GM23248 (cell line): ENCODE measurements at regions of chr15 and their contacts with region 1.

Region 1: DNA sequence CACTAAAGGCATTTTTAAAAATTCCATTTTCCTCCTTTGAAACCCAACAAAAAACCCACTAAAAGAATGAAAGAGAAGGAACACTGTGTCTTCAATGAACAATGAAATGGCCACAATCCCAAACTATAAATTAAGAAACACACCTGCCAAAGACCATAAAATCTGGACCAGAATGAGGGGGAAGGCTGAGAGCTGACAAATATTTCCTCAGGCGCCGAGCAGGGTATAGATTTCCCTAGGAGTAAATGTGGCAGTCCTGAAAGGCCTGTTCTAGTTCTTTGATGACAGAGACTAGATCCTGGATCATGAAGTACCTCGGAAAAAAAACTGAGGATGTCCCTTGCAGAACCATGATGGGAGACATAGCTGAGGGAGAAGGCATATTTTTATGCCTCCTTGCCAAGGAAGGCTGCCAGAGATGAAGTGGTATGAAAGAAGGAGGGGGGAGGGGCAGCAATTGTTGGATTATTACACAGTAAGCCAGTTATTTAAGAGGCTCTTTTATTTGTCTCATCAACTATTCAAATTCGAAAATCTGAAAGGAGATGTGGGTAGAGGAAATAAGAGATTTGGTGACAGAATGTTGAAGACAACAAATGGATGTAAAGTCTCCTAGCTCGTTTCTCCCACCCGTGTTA is 275.3 kb upstream of the GOLGA6L4 start:
- DNase-seq: no peak
- H3K4me3 ChIP-seq: no peak overlapping the region
- H3K27ac ChIP-seq: no peak overlapping the region
- H3K4me1 ChIP-seq: no peaks in the 10 kb centered on the region
- H3K27me3 ChIP-seq: no peaks in the 10 kb centered on the region

Region 2: GRCh38 chr15:82663186-82663600 is 1297.1 kb before region 1 on chr15:
- in situ Hi-C with region 1: no loop called
- DNase-seq: peak; percentile 55
- H3K4me3 ChIP-seq: no peak overlapping the region
- H3K27ac ChIP-seq: no peak overlapping the region
- H3K4me1 ChIP-seq: no peaks in the 10 kb centered on the region
- H3K27me3 ChIP-seq: no peaks in the 10 kb centered on the region

Region 3: DNA sequence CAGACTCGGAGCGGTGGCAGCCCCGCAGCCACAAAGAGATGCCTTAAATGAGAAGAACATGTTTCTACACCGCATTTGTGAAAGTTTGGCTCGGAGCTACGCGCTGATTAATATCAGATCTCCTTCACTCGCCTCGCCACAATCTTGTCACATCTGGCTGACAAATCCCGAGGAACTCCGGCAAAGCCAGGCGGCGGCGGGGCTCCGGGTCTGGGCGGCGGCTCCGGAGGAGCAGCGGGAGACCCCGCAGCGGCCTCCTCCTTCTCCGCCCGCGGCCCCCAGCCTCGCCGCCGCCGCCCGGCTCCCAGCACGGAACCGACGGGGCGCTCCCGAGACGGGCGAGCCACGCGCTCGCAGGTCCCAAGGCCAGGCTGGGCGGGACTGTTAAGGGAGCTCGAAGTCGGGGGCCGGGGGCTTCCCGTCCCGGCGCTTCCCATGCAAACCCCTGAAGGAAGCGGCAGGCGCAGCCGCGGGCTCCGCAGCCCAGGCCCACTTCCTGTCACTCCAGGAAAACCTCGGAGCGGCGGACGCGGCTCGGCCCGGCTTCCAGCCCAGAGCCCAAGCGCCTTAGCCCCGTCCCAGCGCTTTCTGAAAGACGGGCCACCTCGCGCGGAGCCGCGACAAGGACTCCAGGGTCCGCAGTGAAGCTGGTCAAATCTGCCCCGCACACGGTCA is 677.0 kb before region 1 on chr15:
- in situ Hi-C with region 1: no loop called
- DNase-seq: peak; percentile 79
- H3K4me3 ChIP-seq: peak overlapping the region; percentile 78
- H3K27ac ChIP-seq: peak overlapping the region; percentile 74
- H3K4me1 ChIP-seq: peaks cover 42% of the 10 kb centered on the region
- H3K27me3 ChIP-seq: no peaks in the 10 kb centered on the region

Region 4: GRCh38 chr15:83904107-83905040 is 55.9 kb before region 1 on chr15:
- in situ Hi-C with region 1: loop called (anchors 10 kb)
- DNase-seq: peak; percentile 65
- H3K4me3 ChIP-seq: no peak overlapping the region
- H3K27ac ChIP-seq: no peak overlapping the region
- H3K4me1 ChIP-seq: no peaks in the 10 kb centered on the region
- H3K27me3 ChIP-seq: peaks cover 67% of the 10 kb centered on the region

Region 5: GRCh38 chr15:85794603-85795336 is 1834.5 kb after region 1 on chr15 and contains the start of gene KLHL25:
- in situ Hi-C with region 1: no loop called
- DNase-seq: peak; percentile 97
- H3K4me3 ChIP-seq: peak within 1 kb of the TSS; percentile 90
- H3K27ac ChIP-seq: peak within 1 kb of the TSS; percentile 77
- H3K4me1 ChIP-seq: peaks cover 10% of the 10 kb centered on the region
- H3K27me3 ChIP-seq: no peaks in the 10 kb centered on the region
- total RNA-seq, gene KLHL25: 2.5 and 7.1 TPM in 2 replicates